ENCODE measurements at regions of chr1 and their contacts with region 1.

Region 1: GRCh38 chr1:9128520-9129265 is at the start of gene GPR157:
- DNase-seq: peak; percentile 64 to 79 (median 72)
- H3K4me3 ChIP-seq: peak within 1 kb of the TSS; percentile 42 to 72
- H3K4me3 Mint-ChIP-seq: peak within 1 kb of the TSS; percentile 90 to 94 (median 91)
- H3K27ac ChIP-seq: peak within 1 kb of the TSS; percentile 42
- H3K27ac Mint-ChIP-seq: peak within 1 kb of the TSS; percentile 84 to 91 (median 89)
- H3K4me1 ChIP-seq: peaks cover 20% of the 10 kb centered on the region
- H3K4me1 Mint-ChIP-seq: peaks cover 10 to 27% (median 11%) of the 10 kb centered on the region in 4 donors
- H3K27me3 ChIP-seq: no peaks in the 10 kb centered on the region
- H3K27me3 Mint-ChIP-seq: no peaks in the 10 kb centered on the region
- total RNA-seq, gene GPR157: 7.7 to 10.9 TPM

Region 2: DNA sequence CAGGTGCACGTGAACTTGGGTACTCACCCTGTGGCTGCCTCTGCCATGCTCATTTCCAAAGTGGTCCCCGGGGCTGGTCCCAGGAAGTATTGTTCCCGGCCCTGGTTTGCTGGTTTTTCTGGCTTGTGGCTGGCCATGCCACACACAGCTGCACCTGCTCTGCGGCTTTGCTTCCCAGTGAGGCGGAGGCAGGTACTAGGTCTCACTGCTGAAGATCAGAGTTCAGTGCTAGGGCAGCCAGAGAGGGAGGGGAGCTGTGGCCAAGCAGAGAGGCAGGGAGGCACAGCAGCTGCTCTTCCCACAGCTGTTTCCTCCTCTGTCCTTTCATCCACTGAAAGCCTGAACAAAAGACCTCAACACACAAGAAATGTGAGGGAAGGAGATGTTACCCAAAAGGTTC is 280.7 kb before region 1 on chr1:
- CTCF ChIA-PET with region 1: no interaction called
- POLR2A ChIA-PET with region 1: no interaction called
- intact Hi-C with region 1: no loop called
- DNase-seq: no peak
- H3K4me3 ChIP-seq: no peak overlapping the region
- H3K4me3 Mint-ChIP-seq: no peak overlapping the region
- H3K27ac ChIP-seq: no peak overlapping the region
- H3K27ac Mint-ChIP-seq: no peak overlapping the region
- H3K4me1 ChIP-seq: no peaks in the 10 kb centered on the region
- H3K4me1 Mint-ChIP-seq: peaks cover 0 to 2% (median 0%) of the 10 kb centered on the region in 4 donors
- H3K27me3 ChIP-seq: no peaks in the 10 kb centered on the region
- H3K27me3 Mint-ChIP-seq: no peaks in the 10 kb centered on the region

Region 3: DNA sequence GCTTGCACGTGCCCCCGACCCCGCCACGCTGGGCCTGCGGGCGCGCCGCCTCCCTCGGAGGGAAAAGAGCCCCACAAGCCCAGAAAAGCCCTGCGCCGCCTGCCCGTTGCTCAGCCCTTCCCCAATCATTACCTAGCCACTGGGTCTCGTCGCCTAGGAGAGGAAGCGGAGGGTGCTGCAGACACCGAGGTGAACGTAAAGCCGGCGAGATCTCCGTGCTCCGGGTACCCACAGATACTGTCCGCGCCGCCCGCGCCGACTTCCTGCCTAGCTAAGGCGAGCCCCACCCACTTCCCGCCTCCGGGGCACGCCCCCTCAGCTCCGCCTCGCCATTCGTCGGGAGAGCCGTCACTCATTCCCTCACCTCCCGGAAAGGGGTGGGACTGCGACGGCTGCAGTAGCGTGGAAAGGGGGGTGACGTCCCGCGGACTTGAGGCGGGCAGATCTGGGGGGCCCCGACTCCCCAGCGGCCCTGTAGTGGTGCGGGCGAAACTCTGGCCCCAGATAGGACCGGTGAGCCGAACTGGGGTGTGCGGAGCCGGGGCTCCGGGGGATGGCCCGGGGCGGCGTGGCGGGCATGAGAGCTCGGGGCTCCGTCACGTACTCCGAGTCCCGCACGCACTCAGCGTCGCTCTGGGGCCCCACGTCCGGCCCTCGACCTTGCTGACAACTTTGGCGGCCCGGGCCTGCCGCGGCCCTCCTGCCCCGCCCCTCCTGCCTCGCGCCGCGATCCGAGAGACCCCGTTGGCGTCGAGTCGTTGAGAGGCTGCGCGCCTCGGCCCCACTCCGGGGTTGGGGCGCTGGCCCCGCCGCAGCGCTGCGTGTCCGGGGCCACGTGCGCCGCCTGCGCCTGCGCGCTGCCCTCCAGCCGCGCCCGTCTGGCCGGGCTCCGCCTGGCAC is 250.0 kb before region 1 on chr1 and contains the start of gene ENO1:
- CTCF ChIA-PET with region 1: no interaction called
- POLR2A ChIA-PET with region 1: interaction called, 4 read pairs
- intact Hi-C with region 1: loop called (anchors 1 kb)
- DNase-seq: peak; percentile 98 to 100 (median 99)
- H3K4me3 ChIP-seq: peak within 1 kb of the TSS; percentile 73 to 94
- H3K4me3 Mint-ChIP-seq: peak within 1 kb of the TSS; percentile 93 to 97 (median 95)
- H3K27ac ChIP-seq: peak within 1 kb of the TSS; percentile 89
- H3K27ac Mint-ChIP-seq: peak within 1 kb of the TSS; percentile 94 to 99 (median 97)
- H3K4me1 ChIP-seq: peaks cover 48% of the 10 kb centered on the region
- H3K4me1 Mint-ChIP-seq: peaks cover 26 to 61% (median 36%) of the 10 kb centered on the region in 4 donors
- H3K27me3 ChIP-seq: no peaks in the 10 kb centered on the region
- H3K27me3 Mint-ChIP-seq: no peaks in the 10 kb centered on the region
- total RNA-seq, gene ENO1: 291 to 305 TPM

Region 4: GRCh38 chr1:9004700-9005394 is 123.8 kb before region 1 on chr1:
- CTCF ChIA-PET with region 1: no interaction called
- POLR2A ChIA-PET with region 1: no interaction called
- intact Hi-C with region 1: no loop called
- DNase-seq: peak; percentile 60 to 74 (median 68)
- H3K4me3 ChIP-seq: no peak overlapping the region
- H3K4me3 Mint-ChIP-seq: peak overlapping the region in 3 of 8 donors; percentile 21 to 54 (median 31)
- H3K27ac ChIP-seq: no peak overlapping the region
- H3K27ac Mint-ChIP-seq: peak overlapping the region in 1 of 7 donors; percentile 23
- H3K4me1 ChIP-seq: peaks cover 8% of the 10 kb centered on the region
- H3K4me1 Mint-ChIP-seq: peaks cover 0 to 6% (median 3%) of the 10 kb centered on the region in 4 donors
- H3K27me3 ChIP-seq: no peaks in the 10 kb centered on the region
- H3K27me3 Mint-ChIP-seq: no peaks in the 10 kb centered on the region

Region 5: DNA sequence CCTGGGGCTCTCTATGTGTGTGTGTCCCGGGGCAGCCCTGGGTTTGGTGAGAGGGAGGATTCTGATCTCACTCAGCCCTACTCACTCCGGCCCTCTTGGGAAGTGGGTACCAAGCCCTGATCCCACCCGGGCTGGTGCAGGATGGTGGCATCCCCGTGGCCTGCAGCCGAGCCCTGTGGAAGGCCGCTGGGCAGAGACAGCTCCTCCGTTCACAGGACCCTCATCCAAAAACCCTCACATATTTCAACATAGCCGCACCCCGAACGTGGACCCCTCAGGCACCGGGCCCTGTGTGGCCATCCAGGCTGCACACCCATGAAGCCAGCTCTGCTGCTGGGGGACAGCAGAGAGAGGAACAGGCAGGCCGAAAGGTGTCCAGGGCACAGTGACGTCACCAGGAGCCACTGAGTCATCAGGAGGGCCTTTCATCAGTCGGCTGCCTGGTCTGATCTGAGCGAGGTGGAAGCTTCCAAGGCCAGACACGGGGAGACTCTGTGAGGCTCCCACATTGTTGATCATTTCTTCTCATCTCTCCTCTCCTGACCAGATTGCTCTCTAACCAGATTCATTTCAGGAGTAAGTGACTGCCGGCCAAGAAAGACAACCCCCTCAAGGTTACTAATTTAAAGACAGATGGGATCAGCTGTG is 16.5 kb after region 1 on chr1:
- CTCF ChIA-PET with region 1: interaction called, 17 read pairs
- POLR2A ChIA-PET with region 1: interaction called, 3 read pairs
- intact Hi-C with region 1: loop called (anchors 1 kb)
- DNase-seq: no peak
- H3K4me3 ChIP-seq: no peak overlapping the region
- H3K4me3 Mint-ChIP-seq: no peak overlapping the region
- H3K27ac ChIP-seq: no peak overlapping the region
- H3K27ac Mint-ChIP-seq: no peak overlapping the region
- H3K4me1 ChIP-seq: no peaks in the 10 kb centered on the region
- H3K4me1 Mint-ChIP-seq: peaks cover 3 to 5% (median 4%) of the 10 kb centered on the region in 4 donors
- H3K27me3 ChIP-seq: no peaks in the 10 kb centered on the region
- H3K27me3 Mint-ChIP-seq: peaks cover 1 to 6% of the 10 kb centered on the region in 2 donors

Region 6: DNA sequence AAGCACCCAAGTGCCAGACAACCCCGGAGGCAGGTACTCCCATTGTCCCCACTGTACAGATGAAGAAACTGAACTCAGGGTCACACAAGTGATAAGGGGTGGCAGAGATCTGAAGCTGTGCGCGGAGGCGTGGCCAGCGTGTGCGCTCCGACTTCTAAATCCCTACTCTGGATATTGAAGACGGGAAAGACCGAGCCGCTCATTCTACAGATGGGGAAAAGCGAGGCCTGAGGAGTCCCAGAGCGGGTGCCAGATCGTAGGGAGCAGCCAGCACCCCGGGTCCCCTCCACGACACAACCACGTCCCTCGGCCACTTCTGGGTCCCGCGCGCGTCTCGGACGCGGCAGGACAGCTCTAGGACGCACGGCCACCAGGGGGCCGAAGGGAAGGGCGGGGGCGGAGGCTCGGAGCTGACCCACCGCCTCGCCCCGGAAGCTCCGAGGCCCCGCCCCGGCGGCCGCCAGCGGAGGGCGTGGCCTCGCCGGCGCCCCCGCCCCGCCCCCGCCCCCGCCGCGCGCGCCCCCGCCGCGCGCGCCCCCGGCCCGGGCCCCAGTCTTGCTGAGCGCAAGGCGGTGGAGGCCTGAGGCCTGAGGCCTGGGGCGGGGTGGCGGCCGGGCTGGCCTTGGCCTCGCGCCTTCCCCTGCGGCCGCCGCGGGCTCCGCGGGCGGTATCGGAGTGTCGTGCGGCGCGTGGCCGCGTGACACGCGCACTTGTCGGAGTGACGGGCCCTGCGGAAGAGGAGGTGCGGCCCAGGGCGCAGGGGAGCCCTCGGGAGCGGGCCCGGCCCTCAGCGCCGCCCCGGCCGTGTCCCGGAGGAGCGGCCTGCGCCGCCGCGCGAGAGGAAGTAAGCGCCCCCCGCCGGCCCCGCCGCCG is 105.8 kb after region 1 on chr1 and contains the start of gene H6PD:
- CTCF ChIA-PET with region 1: no interaction called
- POLR2A ChIA-PET with region 1: interaction called, 14 read pairs
- intact Hi-C with region 1: loop called (anchors 1 kb)
- DNase-seq: peak; percentile 71 to 85 (median 77)
- H3K4me3 ChIP-seq: peak within 1 kb of the TSS; percentile 70 to 76
- H3K4me3 Mint-ChIP-seq: peak within 1 kb of the TSS; percentile 95 to 98 (median 96)
- H3K27ac ChIP-seq: peak within 1 kb of the TSS; percentile 79
- H3K27ac Mint-ChIP-seq: peak within 1 kb of the TSS; percentile 93 to 99 (median 99)
- H3K4me1 ChIP-seq: peaks cover 32% of the 10 kb centered on the region
- H3K4me1 Mint-ChIP-seq: peaks cover 23 to 49% (median 35%) of the 10 kb centered on the region in 4 donors
- H3K27me3 ChIP-seq: no peaks in the 10 kb centered on the region
- H3K27me3 Mint-ChIP-seq: no peaks in the 10 kb centered on the region
- total RNA-seq, gene H6PD: 17.3 to 18.8 TPM

Region 7: DNA sequence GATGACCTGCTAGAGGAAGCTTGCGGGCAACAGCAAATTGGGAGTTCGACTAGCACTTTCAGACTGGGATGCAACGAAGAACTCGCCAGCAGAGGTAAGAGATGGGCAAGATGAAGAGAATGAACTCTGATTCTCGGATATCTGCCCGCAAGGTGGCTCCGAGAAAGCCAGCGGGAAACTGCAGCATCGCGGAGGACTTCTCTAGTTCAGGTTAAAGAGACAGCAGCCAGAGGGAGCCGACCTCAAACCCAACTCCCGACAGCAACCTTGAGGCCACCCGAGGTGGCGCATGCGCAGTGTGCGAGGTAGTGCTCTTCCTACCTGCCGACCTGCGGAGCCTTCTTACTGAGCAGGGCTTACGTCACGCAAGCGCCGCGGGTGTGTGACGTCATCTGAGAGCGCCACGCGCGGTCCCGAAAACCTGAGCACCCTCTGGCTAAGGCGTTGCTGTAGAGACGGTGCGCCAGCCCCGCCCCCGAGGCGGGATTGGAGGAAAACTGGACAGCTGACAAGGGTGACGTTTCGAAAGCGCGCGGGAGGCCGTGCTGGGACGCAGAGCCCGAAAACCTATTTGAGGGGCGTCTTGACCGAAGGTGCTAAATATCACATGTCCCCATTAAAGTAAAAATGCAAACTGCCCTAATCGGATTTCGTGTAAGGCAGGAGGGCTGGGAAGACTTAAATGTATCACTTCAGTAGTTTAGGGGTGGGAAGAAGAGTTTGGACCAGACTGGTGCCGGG is 300.1 kb after region 1 on chr1:
- CTCF ChIA-PET with region 1: no interaction called
- POLR2A ChIA-PET with region 1: no interaction called
- intact Hi-C with region 1: loop called (anchors 2 kb)
- DNase-seq: peak; percentile 99
- H3K4me3 ChIP-seq: peak overlapping the region; percentile 53 to 58
- H3K4me3 Mint-ChIP-seq: peak overlapping the region; percentile 91 to 99 (median 96)
- H3K27ac ChIP-seq: peak overlapping the region; percentile 71
- H3K27ac Mint-ChIP-seq: peak overlapping the region; percentile 98 to 100 (median 99)
- H3K4me1 ChIP-seq: peaks cover 47% of the 10 kb centered on the region
- H3K4me1 Mint-ChIP-seq: peaks cover 38 to 58% (median 49%) of the 10 kb centered on the region in 4 donors
- H3K27me3 ChIP-seq: no peaks in the 10 kb centered on the region
- H3K27me3 Mint-ChIP-seq: peaks cover 0 to 5% of the 10 kb centered on the region in 2 donors

Measured in CD4-positive, alpha-beta memory T cell (primary cell).